ENCODE measurements at regions of chrX and their contacts with region 1.

Region 1: GRCh38 chrX:153470435-153471363 is at the start of gene HAUS7:
- DNase-seq: peak; percentile 82
- H3K4me3 ChIP-seq: peak within 1 kb of the TSS; percentile 54 to 61 (median 60)
- H3K27ac ChIP-seq: no peak within 1 kb of the TSS
- H3K4me1 ChIP-seq: no peaks in the 10 kb centered on the region
- H3K27me3 ChIP-seq: no peaks in the 10 kb centered on the region
- CTCF ChIP-seq: peak; percentile 32 to 66
- total RNA-seq, gene HAUS7: 8.3 to 26.4 TPM

Region 2: GRCh38 chrX:152537373-152537772 is 933.3 kb before region 1 on chrX:
- CTCF ChIA-PET with region 1: no interaction called
- dilution Hi-C with region 1: no loop called
- in situ Hi-C with region 1: no loop called
- intact Hi-C with region 1: no loop called
- DNase-seq: no peak
- H3K4me3 ChIP-seq: no peak overlapping the region
- H3K27ac ChIP-seq: no peak overlapping the region
- H3K4me1 ChIP-seq: no peaks in the 10 kb centered on the region
- H3K27me3 ChIP-seq: no peaks in the 10 kb centered on the region
- CTCF ChIP-seq: no peak

Region 3: DNA sequence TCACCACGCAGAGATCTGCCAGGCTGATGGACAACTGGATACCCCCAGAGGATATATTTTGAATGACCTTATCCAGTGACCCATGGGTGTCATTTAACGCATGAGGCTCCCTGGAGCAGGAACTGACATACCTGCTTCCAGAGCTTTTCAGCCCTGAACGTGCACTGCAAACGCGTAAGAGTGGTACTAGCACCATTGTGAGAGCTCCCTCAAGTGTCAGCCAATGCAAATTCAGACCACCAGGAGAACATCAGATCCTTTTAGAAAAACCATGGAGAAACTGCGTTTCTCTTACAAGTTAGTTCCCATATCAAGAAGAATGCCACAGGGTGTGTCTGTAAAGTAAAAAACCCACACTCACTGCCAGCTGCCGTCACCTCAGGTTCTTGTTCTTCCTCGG is 32.2 kb before region 1 on chrX:
- CTCF ChIA-PET with region 1: no interaction called
- dilution Hi-C with region 1: no loop called
- in situ Hi-C with region 1: no loop called
- intact Hi-C with region 1: loop called (anchors 2 kb)
- DNase-seq: no peak
- H3K4me3 ChIP-seq: no peak overlapping the region
- H3K27ac ChIP-seq: no peak overlapping the region
- H3K4me1 ChIP-seq: peaks cover 18% of the 10 kb centered on the region
- H3K27me3 ChIP-seq: no peaks in the 10 kb centered on the region
- CTCF ChIP-seq: peak in 1 of 2 donors; percentile 22

Region 4: DNA sequence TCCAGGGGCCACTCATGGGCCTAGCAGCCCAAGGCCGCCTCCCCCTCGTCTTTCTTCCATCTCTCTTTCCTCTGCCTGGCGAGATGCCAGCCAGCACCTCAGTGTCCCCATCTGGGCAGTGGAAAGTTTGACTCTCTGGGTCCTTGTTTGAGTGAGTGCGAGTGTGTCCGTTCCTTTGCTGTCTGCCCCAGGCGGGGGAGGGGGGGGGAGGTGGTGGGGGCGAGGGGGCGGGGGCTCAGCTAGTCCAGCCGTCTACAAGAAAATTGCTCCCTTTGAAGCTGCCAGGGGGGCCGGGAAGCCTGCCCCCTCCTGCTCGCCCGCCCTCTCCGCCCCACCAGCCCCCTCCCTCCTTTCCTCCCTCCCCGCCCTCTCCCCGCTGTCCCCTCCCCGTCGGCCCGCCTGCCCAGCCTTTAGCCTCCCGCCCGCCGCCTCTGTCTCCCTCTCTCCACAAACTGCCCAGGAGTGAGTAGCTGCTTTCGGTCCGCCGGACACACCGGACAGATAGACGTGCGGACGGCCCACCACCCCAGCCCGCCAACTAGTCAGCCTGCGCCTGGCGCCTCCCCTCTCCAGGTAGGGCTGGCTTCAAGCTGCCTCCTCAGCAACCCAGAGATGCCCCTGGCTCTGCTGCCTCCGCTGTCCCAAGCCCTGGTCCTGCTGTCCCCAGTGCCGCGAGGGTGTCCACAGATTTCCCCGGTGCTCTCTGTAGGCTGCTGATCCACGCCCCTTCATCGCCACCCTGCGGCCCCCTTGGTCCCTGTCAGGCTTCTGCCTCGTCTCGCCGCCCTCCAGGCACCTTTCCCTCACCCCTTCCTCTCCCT is 24.1 kb after region 1 on chrX and contains the start of gene BGN:
- CTCF ChIA-PET with region 1: no interaction called
- dilution Hi-C with region 1: no loop called
- in situ Hi-C with region 1: no loop called
- intact Hi-C with region 1: loop called (anchors 1 kb)
- DNase-seq: no peak
- H3K4me3 ChIP-seq: peak within 1 kb of the TSS in 2 of 3 experiments; percentile 27 to 33
- H3K27ac ChIP-seq: no peak within 1 kb of the TSS
- H3K4me1 ChIP-seq: peaks cover 6% of the 10 kb centered on the region
- H3K27me3 ChIP-seq: no peaks in the 10 kb centered on the region
- CTCF ChIP-seq: no peak
- total RNA-seq, gene BGN: 2.6 to 13.5 TPM

Region 5: GRCh38 chrX:153507484-153508178 is 36.9 kb after region 1 on chrX:
- CTCF ChIA-PET with region 1: interaction called, 3 read pairs
- dilution Hi-C with region 1: no loop called
- in situ Hi-C with region 1: no loop called
- intact Hi-C with region 1: loop called (anchors 2 kb)
- DNase-seq: peak; percentile 47
- H3K4me3 ChIP-seq: no peak overlapping the region
- H3K27ac ChIP-seq: no peak overlapping the region
- H3K4me1 ChIP-seq: no peaks in the 10 kb centered on the region
- H3K27me3 ChIP-seq: no peaks in the 10 kb centered on the region
- CTCF ChIP-seq: peak; percentile 51 to 78